ENCODE measurements at regions of chrX and their contacts with region 1.

Region 1: DNA sequence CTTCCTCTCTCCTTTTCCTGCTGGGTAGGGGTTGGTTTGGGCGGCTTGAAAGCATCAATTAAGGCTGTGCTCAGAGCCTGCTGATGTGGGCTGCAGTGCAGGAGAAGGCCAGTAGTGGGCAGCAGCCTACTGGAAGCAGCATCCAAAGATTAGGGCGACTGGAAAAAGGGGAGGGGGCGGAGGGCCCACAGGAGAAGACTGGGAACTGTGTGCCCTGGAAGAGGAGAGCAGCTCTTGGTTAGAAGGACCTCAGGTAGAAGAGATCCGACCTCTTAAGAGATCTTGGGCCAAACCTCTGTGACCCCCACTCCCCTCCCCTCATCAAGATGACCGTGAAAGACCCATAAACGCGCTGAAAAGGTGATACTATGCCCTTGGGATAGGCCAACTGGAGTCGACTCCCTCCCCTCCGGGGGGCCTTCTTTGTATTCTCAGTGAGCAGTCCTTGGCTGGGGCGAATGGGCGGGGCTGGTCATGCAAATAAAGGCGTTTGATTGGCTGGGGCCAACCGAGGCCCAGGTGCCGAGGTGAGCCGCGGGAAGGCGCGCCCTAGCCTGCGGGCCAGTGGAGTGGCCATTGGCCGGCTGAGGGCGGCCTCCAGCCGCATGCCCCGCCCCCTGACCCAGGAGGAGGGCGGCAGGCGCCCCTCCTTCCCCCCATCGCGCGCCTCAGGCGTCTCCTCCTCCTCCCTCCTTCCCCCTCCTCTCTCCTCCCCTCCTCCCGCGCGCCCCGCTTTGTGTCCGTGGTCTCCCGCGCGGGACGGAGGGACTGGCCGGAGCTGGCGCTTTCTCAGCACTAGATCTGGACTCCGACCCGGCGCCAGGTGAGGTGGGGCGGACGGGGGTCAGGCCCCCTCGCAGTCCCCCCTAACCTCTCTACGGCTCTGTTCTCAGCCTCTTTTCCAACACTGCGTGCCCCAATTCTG is 10.1 kb downstream of the DLG3 start:
- DNase-seq: peak; percentile 68 to 92 (median 73)
- H3K4me3 ChIP-seq: peak overlapping the region; percentile 57 to 60
- H3K4me3 Mint-ChIP-seq: peak overlapping the region; percentile 77 to 90 (median 88)
- H3K27ac ChIP-seq: peak overlapping the region; percentile 60
- H3K27ac Mint-ChIP-seq: peak overlapping the region; percentile 78 to 94 (median 92)
- H3K4me1 ChIP-seq: peaks cover 33% of the 10 kb centered on the region
- H3K4me1 Mint-ChIP-seq: peaks cover 23 to 48% (median 32%) of the 10 kb centered on the region in 4 donors
- H3K27me3 ChIP-seq: no peaks in the 10 kb centered on the region
- H3K27me3 Mint-ChIP-seq: no peaks in the 10 kb centered on the region

Region 2: GRCh38 chrX:70444326-70444945 is 10.3 kb before region 1 on chrX and contains the start of gene DLG3:
- CTCF ChIA-PET with region 1: interaction called, 11 read pairs
- POLR2A ChIA-PET with region 1: interaction called, 4 read pairs
- intact Hi-C with region 1: no loop called
- DNase-seq: no peak
- H3K4me3 ChIP-seq: no peak within 1 kb of the TSS
- H3K4me3 Mint-ChIP-seq: peak within 1 kb of the TSS; percentile 64 to 84 (median 76)
- H3K27ac ChIP-seq: no peak within 1 kb of the TSS
- H3K27ac Mint-ChIP-seq: peak within 1 kb of the TSS in 1 of 7 donors; percentile 63
- H3K4me1 ChIP-seq: no peaks in the 10 kb centered on the region
- H3K4me1 Mint-ChIP-seq: peaks cover 0 to 1% (median under 1%) of the 10 kb centered on the region in 4 donors
- H3K27me3 ChIP-seq: peaks cover 4% of the 10 kb centered on the region
- H3K27me3 Mint-ChIP-seq: peaks cover 15 to 21% of the 10 kb centered on the region in 2 donors
- total RNA-seq, gene DLG3: 12.4 to 14.2 TPM

Region 3: DNA sequence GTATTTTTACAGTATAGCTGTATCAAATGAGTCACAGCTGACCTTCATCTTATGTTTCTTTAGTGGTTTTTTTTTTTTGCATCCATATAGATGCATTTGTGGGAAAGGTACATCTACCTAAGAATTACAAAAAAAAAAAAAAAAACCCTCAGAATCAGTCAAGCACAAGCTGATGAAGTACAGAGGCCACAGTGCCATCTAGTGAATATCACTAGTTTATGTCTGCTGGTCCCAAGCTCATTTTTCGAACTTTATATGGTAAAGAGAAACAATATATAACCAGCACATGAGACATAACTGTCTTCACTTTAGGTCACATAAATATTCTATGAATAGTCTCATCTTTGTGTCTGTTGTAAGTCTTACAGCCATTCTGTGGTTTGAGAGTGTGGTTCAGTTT is 210.0 kb after region 1 on chrX:
- CTCF ChIA-PET with region 1: interaction called, 6 read pairs
- POLR2A ChIA-PET with region 1: no interaction called
- intact Hi-C with region 1: loop called (anchors 1 kb)
- DNase-seq: peak in 4 of 5 donors; percentile 1 to 21 (median 11)
- H3K4me3 ChIP-seq: no peak overlapping the region
- H3K4me3 Mint-ChIP-seq: no peak overlapping the region
- H3K27ac ChIP-seq: no peak overlapping the region
- H3K27ac Mint-ChIP-seq: no peak overlapping the region
- H3K4me1 ChIP-seq: no peaks in the 10 kb centered on the region
- H3K4me1 Mint-ChIP-seq: no peaks in the 10 kb centered on the region
- H3K27me3 ChIP-seq: no peaks in the 10 kb centered on the region
- H3K27me3 Mint-ChIP-seq: no peaks in the 10 kb centered on the region

Region 4: GRCh38 chrX:70755850-70756249 is 301.1 kb after region 1 on chrX:
- CTCF ChIA-PET with region 1: no interaction called
- POLR2A ChIA-PET with region 1: interaction called, 3 read pairs
- intact Hi-C with region 1: loop called (anchors 5 kb)
- DNase-seq: peak; percentile 59 to 73 (median 68)
- H3K4me3 ChIP-seq: no peak overlapping the region
- H3K4me3 Mint-ChIP-seq: peak overlapping the region; percentile 20 to 77 (median 69)
- H3K27ac ChIP-seq: no peak overlapping the region
- H3K27ac Mint-ChIP-seq: peak overlapping the region in 5 of 7 donors; percentile 28 to 86 (median 72)
- H3K4me1 ChIP-seq: peaks cover 13% of the 10 kb centered on the region
- H3K4me1 Mint-ChIP-seq: peaks cover 6 to 22% (median 14%) of the 10 kb centered on the region in 4 donors
- H3K27me3 ChIP-seq: no peaks in the 10 kb centered on the region
- H3K27me3 Mint-ChIP-seq: peaks cover 0 to 6% of the 10 kb centered on the region in 2 donors

Measured in CD4-positive, alpha-beta memory T cell (primary cell).